ENCODE measurements at regions of chr5 and their contacts with region 1.

Region 1: GRCh38 chr5:35926389-35927051 is 11.9 kb downstream of the CAPSL start:
- DNase-seq: peak; percentile 81
- ATAC-seq: peak; percentile 42
- H3K4me3 Mint-ChIP-seq: no peak overlapping the region
- H3K27ac Mint-ChIP-seq: no peak overlapping the region
- H3K4me1 Mint-ChIP-seq: peaks cover 26% of the 10 kb centered on the region
- H3K27me3 Mint-ChIP-seq: peaks cover 4% of the 10 kb centered on the region

Region 2: DNA sequence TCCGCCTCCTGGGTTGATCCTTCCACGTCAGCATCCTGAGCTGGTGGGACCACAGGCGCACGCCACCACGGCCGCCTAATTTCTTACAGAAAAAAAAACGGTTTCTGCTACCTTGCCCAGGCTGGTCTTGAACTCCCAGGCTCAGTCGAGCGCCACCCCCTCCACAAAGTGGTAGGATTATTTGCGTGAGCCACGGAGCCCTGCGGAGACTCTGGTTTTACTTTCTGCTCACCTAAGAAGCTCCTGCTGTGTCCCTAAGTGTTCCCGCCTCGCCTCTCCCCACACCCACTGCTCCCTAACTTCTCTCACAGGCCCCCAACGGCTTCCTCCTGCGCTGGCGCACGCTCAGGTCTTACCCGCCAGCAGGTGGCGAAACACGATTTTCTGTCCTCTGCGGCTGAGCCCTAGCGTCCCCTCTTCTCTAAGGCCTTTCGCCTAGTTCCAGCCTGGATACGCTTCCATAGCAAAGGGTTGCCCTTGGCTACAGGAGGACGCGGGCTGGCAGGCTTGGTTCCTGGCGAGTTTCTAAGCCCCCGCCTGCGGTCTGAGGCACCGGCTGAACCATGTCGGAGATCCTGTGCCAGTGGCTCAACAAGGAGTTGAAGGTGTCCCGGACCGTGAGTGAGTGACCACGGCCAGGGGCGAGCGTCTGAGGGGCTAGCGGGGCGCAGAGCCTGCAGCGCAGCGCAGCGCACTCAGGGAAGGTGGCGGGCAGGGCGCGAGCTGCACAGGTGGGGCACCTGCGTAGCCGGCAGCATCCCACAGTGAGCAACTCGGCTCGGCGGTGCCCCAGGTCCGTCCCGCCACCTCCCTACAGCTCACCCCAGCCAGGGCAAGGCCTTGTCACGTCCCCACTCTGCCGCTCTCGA is 308.9 kb before region 1 on chr5 and contains the start of gene SPEF2:
- CTCF ChIA-PET with region 1: interaction called, 41 read pairs
- POLR2A ChIA-PET with region 1: no interaction called
- DNase-seq: peak; percentile 87
- ATAC-seq: peak; percentile 96
- H3K4me3 Mint-ChIP-seq: peak within 1 kb of the TSS; percentile 91
- H3K27ac Mint-ChIP-seq: peak within 1 kb of the TSS; percentile 96
- H3K4me1 Mint-ChIP-seq: peaks cover 33% of the 10 kb centered on the region
- H3K27me3 Mint-ChIP-seq: no peaks in the 10 kb centered on the region
- total RNA-seq, gene SPEF2: 5.1 to 6.4 TPM

Region 3: GRCh38 chr5:35651002-35651756 is 275.3 kb before region 1 on chr5:
- CTCF ChIA-PET with region 1: interaction called, 168 read pairs
- POLR2A ChIA-PET with region 1: interaction called, 7 read pairs
- DNase-seq: peak; percentile 76
- ATAC-seq: peak; percentile 97
- H3K4me3 Mint-ChIP-seq: no peak overlapping the region
- H3K27ac Mint-ChIP-seq: no peak overlapping the region
- H3K4me1 Mint-ChIP-seq: peaks cover 6% of the 10 kb centered on the region
- H3K27me3 Mint-ChIP-seq: no peaks in the 10 kb centered on the region

Region 4: DNA sequence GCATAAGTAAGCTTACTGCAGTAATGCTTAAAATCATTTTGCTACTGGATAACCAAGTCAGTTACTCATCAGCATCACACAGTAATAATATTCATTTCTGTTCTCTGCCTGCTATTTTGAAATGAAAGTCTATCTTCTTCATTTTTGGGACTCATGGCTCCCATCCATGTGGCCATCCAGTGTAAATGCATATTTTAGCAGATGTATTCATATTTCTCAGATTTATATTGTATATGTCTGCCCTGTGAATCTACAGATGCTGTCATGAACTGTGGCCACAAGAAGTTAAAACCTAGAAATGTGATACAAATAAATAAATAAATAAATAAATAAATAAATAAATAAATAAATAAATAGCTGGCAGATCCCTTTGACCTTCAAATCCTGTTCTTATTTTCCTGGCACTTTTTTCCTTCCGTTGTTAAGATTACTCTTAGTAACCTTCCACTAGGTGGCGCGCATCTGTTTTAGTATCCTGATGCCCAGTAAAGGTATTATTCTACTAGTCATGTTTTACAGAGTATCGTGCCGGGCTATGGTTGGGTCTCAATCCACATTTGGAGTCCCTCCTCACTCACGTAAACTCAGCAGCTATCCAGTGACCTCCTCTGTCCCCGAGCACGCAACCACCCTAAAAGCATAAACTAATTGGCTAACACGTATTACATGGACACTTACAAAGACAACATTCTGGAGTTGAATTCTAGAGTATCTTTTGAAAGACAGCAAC is 149.0 kb before region 1 on chr5:
- CTCF ChIA-PET with region 1: interaction called, 160 read pairs
- POLR2A ChIA-PET with region 1: interaction called, 3 read pairs
- DNase-seq: peak; percentile 86
- ATAC-seq: peak; percentile 64
- H3K4me3 Mint-ChIP-seq: no peak overlapping the region
- H3K27ac Mint-ChIP-seq: peak overlapping the region; percentile 45
- H3K4me1 Mint-ChIP-seq: peaks cover 47% of the 10 kb centered on the region
- H3K27me3 Mint-ChIP-seq: no peaks in the 10 kb centered on the region

Region 5: DNA sequence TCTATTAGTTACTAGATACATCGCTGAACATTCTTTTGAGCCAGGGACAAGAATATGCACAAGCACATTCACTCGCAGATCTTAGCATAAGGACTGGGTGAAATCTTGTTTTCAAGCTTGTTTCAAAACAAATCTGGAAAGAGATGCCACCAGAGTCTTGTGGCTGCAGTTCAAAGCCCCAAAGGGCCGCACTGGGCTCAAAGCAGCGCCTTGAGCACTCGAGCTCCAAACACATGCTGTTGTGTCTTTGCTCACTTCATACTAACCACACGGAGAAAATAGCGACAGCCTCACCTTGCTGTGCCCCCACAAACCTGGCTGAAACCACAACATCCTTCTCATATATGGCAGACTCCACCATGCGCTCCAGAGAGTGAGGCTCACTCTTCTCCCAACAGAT is 104.0 kb before region 1 on chr5:
- CTCF ChIA-PET with region 1: interaction called, 18 read pairs
- POLR2A ChIA-PET with region 1: no interaction called
- DNase-seq: peak; percentile 78
- ATAC-seq: peak; percentile 68
- H3K4me3 Mint-ChIP-seq: peak overlapping the region; percentile 30
- H3K27ac Mint-ChIP-seq: peak overlapping the region; percentile 75
- H3K4me1 Mint-ChIP-seq: peaks cover 85% of the 10 kb centered on the region
- H3K27me3 Mint-ChIP-seq: no peaks in the 10 kb centered on the region

Region 6: GRCh38 chr5:35863159-35863558 is 63.4 kb before region 1 on chr5:
- CTCF ChIA-PET with region 1: interaction called, 26 read pairs
- POLR2A ChIA-PET with region 1: interaction called, 3 read pairs
- DNase-seq: no peak
- ATAC-seq: peak; percentile 29
- H3K4me3 Mint-ChIP-seq: peak overlapping the region; percentile 41
- H3K27ac Mint-ChIP-seq: peak overlapping the region; percentile 41
- H3K4me1 Mint-ChIP-seq: peaks cover 74% of the 10 kb centered on the region
- H3K27me3 Mint-ChIP-seq: no peaks in the 10 kb centered on the region

Region 7: DNA sequence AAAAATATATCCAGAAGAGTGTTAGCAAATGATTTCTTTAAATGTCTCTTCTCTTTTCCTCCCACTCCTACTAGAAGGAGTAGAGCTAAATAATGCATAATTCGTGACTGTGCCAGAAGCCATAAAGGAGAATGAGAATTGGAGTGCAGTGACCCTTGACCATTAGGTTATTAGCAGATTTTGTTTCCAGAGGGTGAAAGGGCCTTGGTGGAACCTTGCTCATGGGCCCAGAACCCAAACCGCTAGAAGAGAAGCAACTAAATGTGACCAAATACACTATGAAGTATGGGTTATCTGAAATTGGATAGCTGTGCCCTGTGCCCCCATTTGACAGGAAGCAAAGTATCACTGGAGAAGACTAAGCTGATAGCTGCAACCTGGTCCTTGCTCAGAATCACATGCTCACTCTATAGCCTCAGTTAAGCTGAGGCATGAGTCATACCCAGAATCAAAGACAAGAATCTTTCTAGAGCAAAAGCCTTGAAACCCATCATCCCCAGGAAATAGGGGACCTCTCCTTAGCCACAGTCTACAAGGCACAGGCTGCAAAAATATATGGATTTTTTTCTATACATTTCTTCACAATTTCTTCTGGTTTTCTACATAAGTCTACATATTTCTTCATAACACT is 24.4 kb before region 1 on chr5:
- CTCF ChIA-PET with region 1: interaction called, 29 read pairs
- POLR2A ChIA-PET with region 1: no interaction called
- DNase-seq: peak; percentile 65
- ATAC-seq: peak; percentile 93
- H3K4me3 Mint-ChIP-seq: no peak overlapping the region
- H3K27ac Mint-ChIP-seq: peak overlapping the region; percentile 65
- H3K4me1 Mint-ChIP-seq: peaks cover 68% of the 10 kb centered on the region
- H3K27me3 Mint-ChIP-seq: no peaks in the 10 kb centered on the region

Region 8: GRCh38 chr5:36060420-36060887 is 133.9 kb after region 1 on chr5:
- CTCF ChIA-PET with region 1: no interaction called
- POLR2A ChIA-PET with region 1: no interaction called
- DNase-seq: no peak
- ATAC-seq: no peak
- H3K4me3 Mint-ChIP-seq: no peak overlapping the region
- H3K27ac Mint-ChIP-seq: no peak overlapping the region
- H3K4me1 Mint-ChIP-seq: peaks cover 6% of the 10 kb centered on the region
- H3K27me3 Mint-ChIP-seq: peaks cover 23% of the 10 kb centered on the region